Testis (tissue), 5 donors: ENCODE measurements at regions of chr18 and their contacts with region 1.

Region 1: GRCh38 chr18:13216092-13216582 is 2.4 kb upstream of the LDLRAD4 start:
- DNase-seq: peak; percentile 81
- H3K4me3 ChIP-seq: no peak overlapping the region
- H3K27ac ChIP-seq: peak overlapping the region in 1 of 2 donors; percentile 89
- H3K4me1 ChIP-seq: peaks cover 16% of the 10 kb centered on the region
- H3K27me3 ChIP-seq: no peaks in the 10 kb centered on the region
- CTCF ChIP-seq: peak; percentile 59 to 74 (median 59)
- POLR2A ChIP-seq: no peak

Region 2: GRCh38 chr18:13629841-13630715 is 413.9 kb after region 1 on chr18:
- intact Hi-C with region 1: loop called (anchors 10 kb)
- DNase-seq: peak; percentile 67
- H3K4me3 ChIP-seq: no peak overlapping the region
- H3K27ac ChIP-seq: peak overlapping the region in 1 of 2 donors; percentile 22
- H3K4me1 ChIP-seq: no peaks in the 10 kb centered on the region
- H3K27me3 ChIP-seq: no peaks in the 10 kb centered on the region
- CTCF ChIP-seq: peak; percentile 78 to 83 (median 79)
- POLR2A ChIP-seq: no peak